ENCODE measurements at regions of chr20 and their contacts with region 1.

Region 1: DNA sequence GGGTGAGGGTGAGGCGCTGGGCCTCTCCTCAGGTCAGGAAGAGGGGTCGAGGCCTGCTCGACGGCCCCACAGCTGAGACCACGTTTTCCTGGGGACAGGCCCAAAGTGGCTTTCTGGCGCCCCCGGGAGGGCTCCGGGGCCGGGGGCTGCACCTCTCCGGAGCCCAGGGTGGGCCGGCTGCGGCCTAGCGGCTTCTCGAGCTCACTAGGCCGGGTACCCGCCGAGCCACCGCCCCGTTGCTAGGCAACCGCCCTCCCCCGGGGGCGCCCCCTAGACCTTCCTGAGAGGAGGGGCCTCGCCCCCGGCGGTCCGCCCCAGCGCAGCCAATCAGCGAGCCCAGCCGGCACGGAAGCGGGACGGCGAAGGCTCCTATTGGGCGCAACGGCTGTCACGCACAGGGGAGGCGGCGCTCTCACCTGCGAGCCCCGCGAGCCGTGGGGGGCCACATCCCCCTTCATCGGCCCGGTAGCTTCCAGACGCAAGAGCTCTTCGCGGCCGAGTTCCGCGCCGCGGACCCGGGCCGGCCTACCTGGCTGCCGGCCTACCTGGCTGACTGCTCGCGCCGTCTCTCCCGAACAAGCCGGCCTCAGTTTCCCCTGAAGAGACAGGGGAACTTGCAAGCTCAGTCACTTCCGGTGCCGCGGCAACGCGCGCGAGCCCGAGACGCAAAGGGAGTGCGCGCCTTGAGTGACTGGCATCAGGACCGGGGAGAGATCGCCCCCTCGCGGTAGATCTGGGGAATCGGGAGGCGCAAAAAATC is 831 bp upstream of the BCL2L1 start:
- DNase-seq: peak; percentile 96
- H3K4me3 Mint-ChIP-seq: peak overlapping the region; percentile 97
- H3K27ac Mint-ChIP-seq: peak overlapping the region; percentile 97
- H3K4me1 Mint-ChIP-seq: peaks cover 14% of the 10 kb centered on the region
- H3K27me3 Mint-ChIP-seq: no peaks in the 10 kb centered on the region

Region 2: GRCh38 chr20:31572701-31573554 is 150.6 kb before region 1 on chr20:
- intact Hi-C with region 1: loop called (anchors 5 kb)
- DNase-seq: peak; percentile 77
- H3K4me3 Mint-ChIP-seq: peak overlapping the region; percentile 83
- H3K27ac Mint-ChIP-seq: peak overlapping the region; percentile 80
- H3K4me1 Mint-ChIP-seq: peaks cover 19% of the 10 kb centered on the region
- H3K27me3 Mint-ChIP-seq: no peaks in the 10 kb centered on the region

Region 3: GRCh38 chr20:31630187-31630790 is 93.2 kb before region 1 on chr20:
- intact Hi-C with region 1: loop called (anchors 1 kb)
- DNase-seq: no peak
- H3K4me3 Mint-ChIP-seq: no peak overlapping the region
- H3K27ac Mint-ChIP-seq: no peak overlapping the region
- H3K4me1 Mint-ChIP-seq: no peaks in the 10 kb centered on the region
- H3K27me3 Mint-ChIP-seq: no peaks in the 10 kb centered on the region

Region 4: DNA sequence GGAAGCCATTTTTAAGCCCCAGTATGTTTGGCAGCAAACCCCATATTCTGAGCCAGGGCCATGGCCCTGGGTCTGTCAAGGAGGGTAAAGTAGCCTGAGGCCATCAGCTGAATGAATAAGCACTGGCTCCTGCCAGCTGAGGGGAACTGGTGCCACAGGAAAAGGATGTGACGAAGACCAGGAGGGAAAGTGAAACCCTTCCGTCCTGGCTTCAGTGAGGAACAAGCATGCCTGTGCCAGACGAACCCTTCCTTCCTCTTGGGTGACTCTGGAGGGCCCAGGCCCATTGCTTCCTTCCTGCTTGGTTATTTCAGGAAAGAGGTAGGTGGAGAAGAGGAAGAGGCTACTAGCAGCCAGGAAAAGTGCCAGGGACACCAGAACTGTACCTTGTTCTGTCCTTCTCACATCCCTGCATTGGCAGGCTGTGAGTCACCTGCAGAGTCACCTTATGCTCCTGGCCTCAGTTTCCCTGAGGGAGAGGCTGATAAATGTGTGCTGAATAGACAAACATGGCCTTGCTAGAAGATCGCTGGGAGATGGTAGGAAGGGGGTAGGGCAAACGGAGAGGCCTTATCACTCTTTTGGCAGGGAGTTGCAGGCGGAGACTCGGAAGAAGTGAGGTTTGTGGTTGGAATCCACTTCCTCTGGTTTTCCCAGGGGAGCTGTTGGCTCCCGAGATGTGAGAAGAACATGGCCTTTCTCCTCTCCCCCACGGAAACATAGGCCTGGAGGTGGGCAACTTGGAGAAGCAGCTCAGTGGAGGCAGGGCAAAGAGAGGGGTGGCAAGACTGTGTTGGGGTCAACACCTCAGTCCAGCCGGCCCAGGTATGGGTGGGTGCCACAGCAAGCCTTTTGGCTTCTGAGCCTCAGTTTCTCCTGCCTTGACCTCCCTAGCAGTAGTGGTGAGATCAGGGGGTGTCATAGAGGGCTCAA is 48.3 kb before region 1 on chr20:
- intact Hi-C with region 1: loop called (anchors 1 kb)
- DNase-seq: peak; percentile 62
- H3K4me3 Mint-ChIP-seq: peak overlapping the region; percentile 88
- H3K27ac Mint-ChIP-seq: peak overlapping the region; percentile 93
- H3K4me1 Mint-ChIP-seq: peaks cover 77% of the 10 kb centered on the region
- H3K27me3 Mint-ChIP-seq: no peaks in the 10 kb centered on the region

Region 5: GRCh38 chr20:31738729-31739561 is 15.4 kb after region 1 on chr20 and contains the start of gene TPX2:
- intact Hi-C with region 1: loop called (anchors 1 kb)
- DNase-seq: peak; percentile 81
- H3K4me3 Mint-ChIP-seq: no peak within 1 kb of the TSS
- H3K27ac Mint-ChIP-seq: no peak within 1 kb of the TSS
- H3K4me1 Mint-ChIP-seq: peaks cover 4% of the 10 kb centered on the region
- H3K27me3 Mint-ChIP-seq: no peaks in the 10 kb centered on the region
- total RNA-seq, gene TPX2: 82.8 and 83.0 TPM in 2 replicates